ENCODE measurements at regions of chr6 and their contacts with region 1.

Region 1: DNA sequence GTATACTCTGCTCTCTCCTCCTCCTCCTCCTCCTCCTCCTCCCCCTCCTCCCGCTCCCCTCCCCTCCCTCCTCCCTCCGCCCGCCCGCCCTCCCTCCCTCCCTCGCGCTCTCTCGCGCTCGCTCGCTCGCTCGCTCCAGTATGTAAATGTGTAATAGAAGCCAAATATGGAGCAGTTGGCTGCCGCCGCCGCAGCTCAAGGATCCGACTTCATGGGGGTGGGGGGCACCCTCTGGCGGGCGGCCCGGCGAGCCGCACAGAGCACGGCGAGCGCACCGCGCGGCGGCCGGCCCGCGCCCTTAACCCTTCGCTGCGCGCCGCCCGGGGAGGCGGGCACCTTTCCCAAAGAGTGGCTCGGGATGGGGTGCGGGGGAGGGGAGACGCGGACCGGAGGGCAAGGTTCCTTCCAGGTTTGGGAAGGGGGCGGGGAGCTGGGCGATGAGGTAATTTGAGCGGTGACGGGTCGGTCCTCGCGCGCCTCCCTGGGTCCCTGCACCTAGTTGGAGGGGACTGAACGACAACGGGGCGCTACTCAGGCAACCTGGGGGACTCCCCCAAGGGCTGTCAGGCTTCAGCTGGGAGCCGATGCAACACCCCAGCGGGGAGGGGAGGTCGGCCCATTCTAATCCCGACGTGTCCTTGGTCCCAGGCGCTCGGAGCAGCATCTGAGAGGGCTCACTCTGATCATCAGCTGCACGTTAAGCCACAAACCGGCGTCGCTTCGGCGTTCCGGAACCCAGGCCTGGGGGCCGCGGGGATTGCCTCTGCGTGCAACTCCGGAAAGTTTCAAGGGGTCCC is 409 bp upstream of the ATXN1 start:
- DNase-seq: peak in 1 of 2 donors; percentile 95
- H3K4me3 ChIP-seq: peak overlapping the region; percentile 88 to 93
- H3K27ac ChIP-seq: peak overlapping the region; percentile 99
- H3K4me1 ChIP-seq: peaks cover 39% of the 10 kb centered on the region
- H3K27me3 ChIP-seq: no peaks in the 10 kb centered on the region
- CTCF ChIP-seq: peak in 1 of 3 experiments; percentile 7
- POLR2A ChIP-seq: peak in 1 of 2 donors; percentile 7

Region 2: GRCh38 chr6:16332175-16332542 is 429.5 kb before region 1 on chr6:
- intact Hi-C with region 1: loop called (anchors 5 kb)
- DNase-seq: no peak
- H3K4me3 ChIP-seq: no peak overlapping the region
- H3K27ac ChIP-seq: peak overlapping the region; percentile 42
- H3K4me1 ChIP-seq: peaks cover 62% of the 10 kb centered on the region
- H3K27me3 ChIP-seq: no peaks in the 10 kb centered on the region
- CTCF ChIP-seq: peak; percentile 58 to 84 (median 77)
- POLR2A ChIP-seq: no peak

Region 3: GRCh38 chr6:16409531-16410441 is 351.9 kb before region 1 on chr6:
- intact Hi-C with region 1: loop called (anchors 10 kb)
- DNase-seq: no peak
- H3K4me3 ChIP-seq: no peak overlapping the region
- H3K27ac ChIP-seq: peak overlapping the region; percentile 6
- H3K4me1 ChIP-seq: peaks cover 14% of the 10 kb centered on the region
- H3K27me3 ChIP-seq: no peaks in the 10 kb centered on the region
- CTCF ChIP-seq: peak; percentile 21 to 78 (median 64)
- POLR2A ChIP-seq: no peak

Region 4: DNA sequence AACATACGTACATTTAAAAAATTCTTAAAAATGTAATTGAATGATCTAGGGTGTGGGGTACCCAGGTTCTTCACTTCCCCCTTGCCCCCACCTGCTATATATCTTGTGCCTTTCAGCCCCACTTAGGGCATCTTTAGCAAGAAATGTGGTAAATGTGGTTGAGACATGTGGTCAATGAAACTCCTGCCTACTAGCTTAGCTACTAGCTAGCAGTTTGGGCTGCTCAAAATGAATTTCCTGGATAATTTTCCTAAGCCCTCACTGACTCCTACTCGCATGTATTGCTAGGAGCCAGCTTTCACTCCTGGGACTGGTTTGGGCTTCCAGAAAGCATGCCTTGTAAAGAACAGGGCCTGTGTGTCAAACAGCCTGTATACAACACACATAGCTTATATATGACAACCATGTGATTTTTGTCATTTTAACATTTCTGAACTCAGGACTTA is 257.7 kb before region 1 on chr6:
- intact Hi-C with region 1: loop called (anchors 5 kb)
- DNase-seq: no peak
- H3K4me3 ChIP-seq: no peak overlapping the region
- H3K27ac ChIP-seq: peak overlapping the region; percentile 9
- H3K4me1 ChIP-seq: peaks cover 27% of the 10 kb centered on the region
- H3K27me3 ChIP-seq: no peaks in the 10 kb centered on the region
- CTCF ChIP-seq: no peak
- POLR2A ChIP-seq: no peak

Region 5: GRCh38 chr6:16540804-16541752 is 220.6 kb before region 1 on chr6:
- intact Hi-C with region 1: loop called (anchors 10 kb)
- DNase-seq: no peak
- H3K4me3 ChIP-seq: no peak overlapping the region
- H3K27ac ChIP-seq: no peak overlapping the region
- H3K4me1 ChIP-seq: peaks cover 11% of the 10 kb centered on the region
- H3K27me3 ChIP-seq: no peaks in the 10 kb centered on the region
- CTCF ChIP-seq: no peak
- POLR2A ChIP-seq: no peak

Region 6: GRCh38 chr6:16901782-16902181 is 140.1 kb after region 1 on chr6:
- intact Hi-C with region 1: no loop called
- DNase-seq: no peak
- H3K4me3 ChIP-seq: no peak overlapping the region
- H3K27ac ChIP-seq: no peak overlapping the region
- H3K4me1 ChIP-seq: no peaks in the 10 kb centered on the region
- H3K27me3 ChIP-seq: no peaks in the 10 kb centered on the region
- CTCF ChIP-seq: no peak
- POLR2A ChIP-seq: no peak

Measured in vagina (tissue), 2 donors.